ENCODE measurements at regions of chr5 and their contacts with region 1.

Region 1: GRCh38 chr5:132495667-132496190 is 5.2 kb upstream of the IRF1 start:
- DNase-seq: peak; percentile 94
- H3K4me3 ChIP-seq: peak overlapping the region; percentile 54
- H3K4me3 Mint-ChIP-seq: peak overlapping the region; percentile 88
- H3K27ac Mint-ChIP-seq: peak overlapping the region; percentile 85
- H3K4me1 ChIP-seq: peaks cover 46% of the 10 kb centered on the region
- H3K4me1 Mint-ChIP-seq: peaks cover 27% of the 10 kb centered on the region
- H3K27me3 ChIP-seq: no peaks in the 10 kb centered on the region
- H3K27me3 Mint-ChIP-seq: no peaks in the 10 kb centered on the region
- CTCF ChIP-seq: no peak

Region 2: DNA sequence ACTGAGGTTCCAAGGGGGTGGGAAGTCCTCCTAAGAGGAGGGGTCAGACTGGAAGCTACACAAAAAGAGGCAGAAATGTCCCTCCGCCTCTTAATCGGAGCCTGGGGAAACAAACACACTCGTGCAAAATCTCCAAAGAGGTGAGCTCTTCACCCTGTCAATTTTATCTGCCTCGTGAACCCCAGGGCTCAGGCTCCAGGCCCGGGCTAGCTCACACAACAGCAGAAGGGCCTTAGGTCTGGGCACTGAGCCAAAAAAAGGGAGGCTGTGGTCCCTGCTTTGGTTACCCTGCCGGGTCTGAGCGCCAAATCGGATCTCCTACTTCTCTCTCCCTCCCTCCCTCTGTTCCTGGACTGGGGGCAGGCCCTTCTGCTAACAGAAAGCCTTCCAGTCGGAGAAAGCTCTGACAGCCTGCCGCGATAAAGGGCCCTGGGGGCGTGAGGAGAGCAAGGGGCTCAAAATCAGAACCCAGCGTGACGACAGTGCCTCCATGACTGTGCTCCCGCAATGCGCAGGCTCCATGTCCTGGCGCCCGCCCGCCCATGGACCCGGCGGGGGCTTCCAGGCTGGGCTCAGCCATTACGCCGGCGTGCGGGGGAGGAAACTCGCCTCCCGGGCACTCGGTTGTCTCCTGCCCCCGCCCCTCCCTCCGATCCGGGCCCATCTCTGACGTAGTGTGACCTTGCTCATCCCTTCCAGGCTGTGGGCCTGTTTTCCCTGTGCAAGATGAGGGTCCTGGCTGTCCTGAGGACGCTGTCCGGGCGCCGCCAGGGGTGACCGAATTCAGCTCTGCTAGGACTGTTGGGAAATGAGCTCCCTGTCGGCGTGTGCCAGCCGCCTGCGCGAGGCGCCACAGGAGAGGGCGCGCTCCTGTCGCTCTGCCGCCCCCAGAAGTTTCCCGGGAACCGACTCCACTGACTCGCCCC is 202.4 kb before region 1 on chr5:
- CTCF ChIA-PET with region 1: interaction called, 5 read pairs
- POLR2A ChIA-PET with region 1: interaction called, 20 read pairs
- intact Hi-C with region 1: no loop called
- DNase-seq: peak; percentile 89 to 91
- H3K4me3 ChIP-seq: peak overlapping the region; percentile 55
- H3K4me3 Mint-ChIP-seq: peak overlapping the region; percentile 85
- H3K27ac Mint-ChIP-seq: peak overlapping the region; percentile 93
- H3K4me1 ChIP-seq: peaks cover 8% of the 10 kb centered on the region; the same call in 1 of the 2 replicates
- H3K4me1 Mint-ChIP-seq: peaks cover 12% of the 10 kb centered on the region
- H3K27me3 ChIP-seq: no peaks in the 10 kb centered on the region
- H3K27me3 Mint-ChIP-seq: no peaks in the 10 kb centered on the region
- CTCF ChIP-seq: peak in 1 of 2 experiments; percentile 13

Region 3: GRCh38 chr5:132426525-132427138 is 69.1 kb before region 1 on chr5:
- CTCF ChIA-PET with region 1: interaction called, 8 read pairs
- POLR2A ChIA-PET with region 1: interaction called, 8 read pairs
- intact Hi-C with region 1: loop called (anchors 1 kb)
- DNase-seq: peak in 1 of 2 experiments; percentile 58
- H3K4me3 ChIP-seq: no peak overlapping the region
- H3K4me3 Mint-ChIP-seq: no peak overlapping the region
- H3K27ac Mint-ChIP-seq: peak overlapping the region; percentile 22
- H3K4me1 ChIP-seq: peaks cover 56% of the 10 kb centered on the region
- H3K4me1 Mint-ChIP-seq: peaks cover 44% of the 10 kb centered on the region
- H3K27me3 ChIP-seq: no peaks in the 10 kb centered on the region
- H3K27me3 Mint-ChIP-seq: no peaks in the 10 kb centered on the region
- CTCF ChIP-seq: peak in 1 of 2 experiments; percentile 56

Region 4: DNA sequence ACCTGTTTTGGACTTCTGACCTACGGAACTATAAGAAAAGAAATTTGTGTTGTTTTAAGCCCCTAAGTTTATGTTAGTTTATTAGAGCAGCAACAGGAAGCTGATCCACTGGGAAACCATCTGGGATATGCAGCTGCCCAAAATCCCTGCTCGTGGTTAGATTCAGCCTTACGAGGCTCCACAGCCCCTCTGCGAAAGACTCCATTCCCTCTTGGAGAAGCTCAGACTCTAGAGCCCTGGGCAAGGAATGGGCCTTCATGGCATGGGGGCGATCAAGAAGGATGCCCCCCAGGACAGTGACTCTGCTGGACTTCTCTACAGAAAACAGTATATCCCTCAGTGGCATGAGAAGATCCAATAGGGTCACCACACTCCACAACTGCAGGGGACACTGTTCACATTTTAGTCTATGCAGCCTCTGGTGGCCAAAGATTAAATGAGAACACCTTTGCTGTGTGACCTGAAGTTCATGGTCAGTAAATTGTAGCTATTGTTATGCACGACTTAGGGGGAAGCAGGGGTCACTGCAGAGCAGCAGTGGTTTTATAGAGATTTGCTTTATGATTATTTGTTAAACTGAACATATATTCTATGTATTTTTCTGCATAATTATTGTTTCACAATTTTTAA is 26.2 kb before region 1 on chr5:
- CTCF ChIA-PET with region 1: interaction called, 12 read pairs
- POLR2A ChIA-PET with region 1: interaction called, 14 read pairs
- intact Hi-C with region 1: loop called (anchors 2 kb)
- DNase-seq: no peak
- H3K4me3 ChIP-seq: no peak overlapping the region
- H3K4me3 Mint-ChIP-seq: no peak overlapping the region
- H3K27ac Mint-ChIP-seq: peak overlapping the region; percentile 20
- H3K4me1 ChIP-seq: peaks cover 30% of the 10 kb centered on the region
- H3K4me1 Mint-ChIP-seq: peaks cover 17% of the 10 kb centered on the region
- H3K27me3 ChIP-seq: no peaks in the 10 kb centered on the region
- H3K27me3 Mint-ChIP-seq: no peaks in the 10 kb centered on the region
- CTCF ChIP-seq: no peak

Region 5: GRCh38 chr5:132714456-132715307 is 219.0 kb after region 1 on chr5:
- CTCF ChIA-PET with region 1: no interaction called
- POLR2A ChIA-PET with region 1: no interaction called
- intact Hi-C with region 1: no loop called
- DNase-seq: no peak
- H3K4me3 ChIP-seq: no peak overlapping the region
- H3K4me3 Mint-ChIP-seq: no peak overlapping the region
- H3K27ac Mint-ChIP-seq: no peak overlapping the region
- H3K4me1 ChIP-seq: no peaks in the 10 kb centered on the region
- H3K4me1 Mint-ChIP-seq: no peaks in the 10 kb centered on the region
- H3K27me3 ChIP-seq: no peaks in the 10 kb centered on the region
- H3K27me3 Mint-ChIP-seq: no peaks in the 10 kb centered on the region
- CTCF ChIP-seq: peak; percentile 11 to 37

Region 6: DNA sequence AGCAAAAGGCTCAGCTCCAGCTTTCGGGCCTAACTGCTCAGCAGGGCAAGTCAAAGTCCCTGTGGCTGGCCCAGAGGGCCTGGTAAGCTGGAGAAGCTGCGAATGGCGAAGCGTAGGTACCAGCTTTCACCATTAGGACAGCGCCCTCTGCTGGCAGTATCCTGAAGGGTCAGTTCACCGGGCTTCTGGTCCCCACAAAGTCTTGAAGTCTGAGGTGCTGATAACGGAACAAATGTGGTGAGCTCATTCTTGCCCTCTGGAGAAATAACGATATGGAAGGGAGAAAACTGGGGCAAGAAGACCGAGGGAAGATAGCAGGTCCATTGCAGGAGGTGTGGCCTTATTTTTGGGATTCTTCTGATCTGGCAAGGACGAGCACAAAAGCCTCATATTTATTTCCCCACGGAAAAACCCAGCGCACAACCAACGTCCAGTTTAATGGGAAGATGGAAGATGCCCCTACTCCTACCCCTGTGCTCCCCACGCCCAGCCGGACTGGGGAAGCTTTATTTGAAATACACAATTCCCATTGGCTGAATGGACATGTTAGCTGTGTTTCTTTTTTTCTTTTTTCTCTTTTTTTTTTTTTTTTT is 324.5 kb after region 1 on chr5:
- CTCF ChIA-PET with region 1: interaction called, 12 read pairs
- POLR2A ChIA-PET with region 1: no interaction called
- intact Hi-C with region 1: no loop called
- DNase-seq: peak; percentile 90
- H3K4me3 ChIP-seq: no peak overlapping the region
- H3K4me3 Mint-ChIP-seq: no peak overlapping the region
- H3K27ac Mint-ChIP-seq: no peak overlapping the region
- H3K4me1 ChIP-seq: no peaks in the 10 kb centered on the region; the same call in none of the 2 replicates
- H3K4me1 Mint-ChIP-seq: no peaks in the 10 kb centered on the region
- H3K27me3 ChIP-seq: no peaks in the 10 kb centered on the region
- H3K27me3 Mint-ChIP-seq: no peaks in the 10 kb centered on the region
- CTCF ChIP-seq: peak; percentile 89